Aorta (tissue), 5 donors: ENCODE measurements at regions of chr19 and their contacts with region 1.

Region 1: GRCh38 chr19:38729653-38730469 is 14.4 kb downstream of the CAPN12 start:
- DNase-seq: peak; percentile 78 to 92
- ATAC-seq: peak; percentile 46
- H3K4me3 ChIP-seq: no peak overlapping the region
- H3K27ac ChIP-seq: no peak overlapping the region
- H3K4me1 ChIP-seq: no peaks in the 10 kb centered on the region
- H3K27me3 ChIP-seq: no peaks in the 10 kb centered on the region

Region 2: GRCh38 chr19:38387550-38388348 is 342.1 kb before region 1 on chr19 and contains the start of gene GGN:
- intact Hi-C with region 1: loop called in 1 of 2 experiments (anchors 10 kb)
- DNase-seq: peak; percentile 93 to 95
- ATAC-seq: peak; percentile 86
- H3K4me3 ChIP-seq: peak within 1 kb of the TSS; percentile 45 to 56
- H3K27ac ChIP-seq: peak within 1 kb of the TSS; percentile 20 to 73
- H3K4me1 ChIP-seq: no peaks in the 10 kb centered on the region
- H3K27me3 ChIP-seq: no peaks in the 10 kb centered on the region
- total RNA-seq, gene GGN: 3.3 to 4.7 TPM

Region 3: GRCh38 chr19:38634757-38635482 is 94.9 kb before region 1 on chr19:
- intact Hi-C with region 1: no loop called
- DNase-seq: peak; percentile 79 to 94
- ATAC-seq: peak; percentile 80
- H3K4me3 ChIP-seq: no peak overlapping the region
- H3K27ac ChIP-seq: no peak overlapping the region
- H3K4me1 ChIP-seq: no peaks in the 10 kb centered on the region
- H3K27me3 ChIP-seq: no peaks in the 10 kb centered on the region

Region 4: GRCh38 chr19:38647368-38647965 is 82.4 kb before region 1 on chr19 and contains the start of gene ACTN4:
- intact Hi-C with region 1: loop called in 1 of 2 experiments (anchors 2 kb)
- DNase-seq: peak; percentile 99 to 100
- ATAC-seq: peak; percentile 94
- H3K4me3 ChIP-seq: peak within 1 kb of the TSS; percentile 98 to 100
- H3K27ac ChIP-seq: peak within 1 kb of the TSS; percentile 95 to 97
- H3K4me1 ChIP-seq: peaks cover 0 to 3% of the 10 kb centered on the region in 2 donors
- H3K27me3 ChIP-seq: no peaks in the 10 kb centered on the region
- total RNA-seq, gene ACTN4: 794 to 1,985 TPM

Region 5: GRCh38 chr19:38831142-38831605 is 101.3 kb after region 1 on chr19:
- intact Hi-C with region 1: loop called in 1 of 2 experiments (anchors 5 kb)
- DNase-seq: peak; percentile 81 to 88
- ATAC-seq: peak; percentile 64
- H3K4me3 ChIP-seq: peak overlapping the region; percentile 42 to 43
- H3K27ac ChIP-seq: peak overlapping the region in 1 of 2 donors; percentile 78
- H3K4me1 ChIP-seq: peaks cover 0 to 2% of the 10 kb centered on the region in 2 donors
- H3K27me3 ChIP-seq: no peaks in the 10 kb centered on the region